PC-9 (cell line): ENCODE measurements at regions of chr7 and their contacts with region 1.

Region 1: DNA sequence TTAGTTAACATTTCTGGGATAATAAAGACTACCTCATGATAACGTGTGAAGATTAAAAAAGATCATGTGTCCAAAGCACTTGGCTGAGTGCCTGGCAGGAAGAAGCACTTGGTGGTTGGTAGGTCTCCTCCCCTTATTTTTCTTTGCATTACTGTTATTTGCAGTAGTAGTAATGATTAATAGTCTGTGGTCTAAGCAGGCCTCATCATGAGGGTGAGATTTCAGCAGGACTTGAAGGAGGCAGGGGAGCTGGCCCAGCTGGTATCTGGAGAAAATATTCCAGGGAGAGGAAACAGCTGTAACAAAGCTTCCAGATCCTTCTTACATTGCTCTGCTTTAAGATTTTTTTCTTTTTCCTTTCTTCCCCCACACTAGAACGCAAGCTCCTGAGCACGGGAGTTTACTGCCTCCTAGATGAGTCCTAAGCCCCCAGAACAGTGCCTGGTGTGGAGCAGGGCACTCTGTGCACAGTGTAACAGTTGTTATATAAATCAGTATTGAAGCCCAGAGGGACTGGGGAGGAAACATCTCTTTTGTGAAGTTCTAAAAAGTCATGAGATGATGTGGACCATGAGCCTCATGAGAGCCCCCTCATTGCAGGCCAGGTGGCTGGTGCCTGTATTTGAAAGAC is 31.1 kb upstream of the RHEB start:
- DNase-seq: peak in 1 of 2 experiments; percentile 12
- H3K4me3 ChIP-seq: no peak overlapping the region
- H3K27ac ChIP-seq: no peak overlapping the region
- H3K4me1 ChIP-seq: peaks cover 32% of the 10 kb centered on the region
- H3K27me3 ChIP-seq: no peaks in the 10 kb centered on the region
- CTCF ChIP-seq: no peak

Region 2: DNA sequence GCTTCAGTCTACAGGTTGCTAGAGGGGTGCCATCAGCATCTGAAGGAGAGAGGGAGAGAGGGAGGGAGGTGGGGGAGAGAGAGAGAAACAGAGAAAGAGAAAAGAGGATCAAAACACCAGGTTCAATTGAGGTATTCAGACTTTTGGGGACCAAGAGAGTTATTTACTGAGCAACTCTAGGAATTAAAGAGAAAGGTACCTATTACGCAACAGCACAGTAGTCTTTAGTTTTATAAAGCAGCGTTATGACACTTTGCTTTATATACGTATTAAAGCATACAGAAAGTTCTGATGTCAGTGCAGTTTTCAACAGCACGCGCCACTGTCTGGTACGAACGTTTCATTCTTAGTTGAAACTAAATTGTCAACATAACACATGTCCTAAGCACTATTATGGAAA is 72.9 kb before region 1 on chr7:
- CTCF ChIA-PET with region 1: no interaction called
- POLR2A ChIA-PET with region 1: no interaction called
- intact Hi-C with region 1: loop called (anchors 5 kb)
- DNase-seq: no peak
- H3K4me3 ChIP-seq: no peak overlapping the region
- H3K27ac ChIP-seq: no peak overlapping the region
- H3K4me1 ChIP-seq: peaks cover 2% of the 10 kb centered on the region; the same call in 1 of the 2 replicates
- H3K27me3 ChIP-seq: no peaks in the 10 kb centered on the region
- CTCF ChIP-seq: no peak

Region 3: GRCh38 chr7:151626422-151627115 is 75.8 kb after region 1 on chr7:
- CTCF ChIA-PET with region 1: no interaction called
- POLR2A ChIA-PET with region 1: interaction called, 14 read pairs
- intact Hi-C with region 1: no loop called
- DNase-seq: peak; percentile 37 to 55
- H3K4me3 ChIP-seq: no peak overlapping the region
- H3K27ac ChIP-seq: no peak overlapping the region
- H3K4me1 ChIP-seq: peaks cover 16% of the 10 kb centered on the region
- H3K27me3 ChIP-seq: no peaks in the 10 kb centered on the region
- CTCF ChIP-seq: peak; percentile 65

Region 4: DNA sequence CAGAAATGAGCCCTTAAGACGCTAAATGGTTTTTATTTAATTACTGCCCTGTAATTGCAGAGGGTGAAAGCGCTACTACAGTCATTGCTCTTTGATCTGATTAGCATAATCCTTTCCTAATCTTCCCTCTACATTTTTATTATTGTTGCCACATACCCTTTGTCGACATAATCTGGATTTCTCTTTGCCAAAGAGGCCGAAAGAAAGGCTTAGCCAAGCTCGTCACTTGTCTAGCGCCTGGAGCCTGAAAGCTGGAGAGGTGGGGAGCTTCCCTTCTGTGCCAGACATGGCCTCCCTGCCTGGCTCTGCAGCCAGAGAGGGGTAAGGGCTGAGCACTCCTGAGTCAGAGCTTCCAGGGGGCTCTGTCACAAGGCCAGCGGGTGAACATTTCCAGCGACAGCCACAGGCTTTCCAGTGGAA is 180.3 kb after region 1 on chr7:
- CTCF ChIA-PET with region 1: no interaction called
- POLR2A ChIA-PET with region 1: no interaction called
- intact Hi-C with region 1: no loop called
- DNase-seq: peak in 1 of 2 experiments; percentile 31
- H3K4me3 ChIP-seq: no peak overlapping the region
- H3K27ac ChIP-seq: no peak overlapping the region
- H3K4me1 ChIP-seq: peaks cover 34% of the 10 kb centered on the region
- H3K27me3 ChIP-seq: no peaks in the 10 kb centered on the region
- CTCF ChIP-seq: no peak